ENCODE measurements at regions of chr11 and their contacts with region 1.

Region 1: DNA sequence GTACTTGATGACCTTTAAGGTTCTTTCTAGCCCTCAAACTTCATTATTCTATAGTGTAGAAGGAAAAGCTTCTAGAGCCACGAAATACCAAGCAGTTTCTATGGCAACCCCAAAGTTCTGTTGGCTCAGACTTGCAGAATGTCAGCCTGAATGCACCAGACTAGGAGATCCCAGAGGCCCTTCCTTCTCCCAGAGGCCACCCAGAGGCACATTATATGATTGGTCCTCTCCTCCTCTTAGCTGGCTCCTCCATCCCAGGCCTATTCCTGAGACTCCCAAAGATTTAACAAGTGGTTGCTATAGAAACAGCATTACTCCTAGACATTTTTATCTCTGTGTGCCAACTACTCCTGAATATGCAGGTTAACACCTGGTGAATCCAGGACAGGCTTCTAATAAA is 69.2 kb upstream of the CCDC90B start:
- DNase-seq: no peak
- ATAC-seq: no peak
- H3K4me3 ChIP-seq: no peak overlapping the region
- H3K27ac ChIP-seq: no peak overlapping the region
- H3K4me1 ChIP-seq: no peaks in the 10 kb centered on the region
- H3K27me3 ChIP-seq: no peaks in the 10 kb centered on the region
- CTCF ChIP-seq: 0 out of 2 replicates have a peak, but pooled peaks have one; percentile 5

Region 2: GRCh38 chr11:83410605-83411565 is 55.5 kb after region 1 on chr11:
- CTCF ChIA-PET with region 1: no interaction called
- POLR2A ChIA-PET with region 1: no interaction called
- in situ Hi-C with region 1: no loop called
- intact Hi-C with region 1: loop called (anchors 10 kb)
- DNase-seq: no peak
- ATAC-seq: no peak
- H3K4me3 ChIP-seq: no peak overlapping the region
- H3K27ac ChIP-seq: no peak overlapping the region
- H3K4me1 ChIP-seq: no peaks in the 10 kb centered on the region
- H3K27me3 ChIP-seq: no peaks in the 10 kb centered on the region
- CTCF ChIP-seq: no peak